Ascending aorta (tissue), 2 donors: ENCODE measurements at regions of chr3 and their contacts with region 1.

Region 1: GRCh38 chr3:101809178-101810021 is 30.4 kb downstream of the NXPE3 start:
- DNase-seq: no peak
- H3K4me3 ChIP-seq: no peak overlapping the region
- H3K27ac ChIP-seq: peak overlapping the region in 1 of 2 donors; percentile 24
- H3K4me1 ChIP-seq: peaks cover 0 to 17% of the 10 kb centered on the region in 2 donors
- H3K27me3 ChIP-seq: no peaks in the 10 kb centered on the region
- CTCF ChIP-seq: peak; percentile 52 to 69 (median 63)

Region 2: DNA sequence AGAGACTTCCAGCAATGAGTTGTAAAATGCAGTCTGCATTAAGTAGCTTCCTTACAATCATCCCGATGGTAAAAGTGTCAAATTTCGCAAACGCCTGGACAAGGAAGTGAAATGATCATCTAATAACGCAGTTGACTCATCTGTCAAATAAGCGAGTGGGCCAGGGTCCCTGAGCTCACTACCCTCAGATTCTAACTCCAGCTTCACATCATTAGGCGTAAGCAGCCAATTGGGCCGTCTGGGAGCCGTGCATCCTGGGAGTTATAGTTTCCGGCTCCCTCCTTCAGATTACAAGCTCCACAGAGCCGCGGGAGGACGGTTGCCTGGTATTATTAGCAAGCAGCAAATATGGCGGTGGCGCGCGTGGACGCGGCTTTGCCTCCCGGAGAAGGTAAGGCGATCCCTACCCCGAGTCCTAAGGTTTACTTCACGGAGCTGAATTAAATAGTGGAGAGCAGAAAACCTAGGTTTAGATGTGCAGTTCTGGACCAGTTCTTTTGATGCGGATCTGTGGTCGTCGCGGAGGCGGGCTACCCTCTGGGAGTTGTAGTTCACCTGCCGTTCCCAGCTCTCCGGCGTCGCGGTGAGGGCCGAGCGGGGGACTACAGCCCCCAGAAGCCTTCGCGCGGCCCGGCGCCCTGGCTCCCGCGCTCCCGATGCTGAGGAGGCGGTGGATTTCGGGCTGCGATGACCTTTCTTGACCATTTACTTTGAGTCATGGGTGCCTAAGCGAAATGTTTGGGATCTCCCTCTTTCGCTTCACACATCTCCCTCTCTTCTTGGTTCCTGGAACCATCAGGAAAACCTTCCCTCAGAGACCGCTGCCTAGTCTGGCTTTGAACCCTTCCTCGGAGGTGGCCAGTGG is 84.8 kb before region 1 on chr3 and contains the start of gene CEP97:
- intact Hi-C with region 1: no loop called
- DNase-seq: peak; percentile 80 to 96
- H3K4me3 ChIP-seq: peak within 1 kb of the TSS; percentile 70 to 75
- H3K27ac ChIP-seq: peak within 1 kb of the TSS; percentile 54 to 72
- H3K4me1 ChIP-seq: peaks cover 0 to 4% of the 10 kb centered on the region in 2 donors
- H3K27me3 ChIP-seq: no peaks in the 10 kb centered on the region
- CTCF ChIP-seq: peak in 1 of 3 experiments; percentile 6
- total RNA-seq, gene CEP97: 1.3 TPM

Region 3: DNA sequence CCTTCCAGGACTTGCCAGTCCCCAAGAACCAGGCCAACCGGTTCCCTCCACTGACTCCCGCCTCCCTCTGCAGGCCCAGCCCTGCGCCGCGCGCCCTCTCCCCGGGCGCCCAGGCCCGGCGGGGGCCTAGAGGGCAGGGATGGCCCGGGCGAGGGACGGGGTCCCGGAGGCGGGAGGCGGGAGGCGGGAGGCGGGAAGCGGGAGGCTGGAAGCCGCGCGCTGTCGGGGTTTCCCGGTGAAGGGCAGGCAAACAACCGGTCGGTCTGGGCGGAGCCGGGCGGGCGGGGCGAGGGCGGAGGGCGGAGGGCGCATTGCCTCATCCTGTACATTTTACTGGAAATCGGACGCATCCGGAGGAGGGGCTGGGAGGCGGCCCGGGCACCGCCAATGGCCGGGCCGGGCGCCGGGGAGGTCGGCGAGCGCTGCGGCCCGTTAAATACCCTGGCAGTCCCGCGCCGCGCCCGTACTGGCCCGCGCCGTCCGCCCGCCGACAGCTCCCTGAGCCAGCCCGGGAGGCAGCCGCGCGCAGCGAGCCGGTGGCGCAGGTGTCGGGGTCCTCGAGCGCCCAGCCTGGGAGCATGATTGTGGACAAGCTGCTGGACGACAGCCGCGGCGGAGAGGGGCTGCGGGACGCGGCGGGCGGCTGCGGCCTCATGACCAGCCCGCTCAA is 39.8 kb after region 1 on chr3 and contains the start of gene NFKBIZ:
- intact Hi-C with region 1: loop called (anchors 5 kb)
- DNase-seq: peak; percentile 87 to 98
- H3K4me3 ChIP-seq: peak within 1 kb of the TSS; percentile 90 to 93
- H3K27ac ChIP-seq: peak within 1 kb of the TSS; percentile 98 to 99
- H3K4me1 ChIP-seq: peaks cover 0 to 26% of the 10 kb centered on the region in 2 donors
- H3K27me3 ChIP-seq: no peaks in the 10 kb centered on the region
- CTCF ChIP-seq: peak in 1 of 3 experiments; percentile 20
- total RNA-seq, gene NFKBIZ: 349 TPM

Region 4: GRCh38 chr3:101868534-101869464 is 59.4 kb after region 1 on chr3:
- intact Hi-C with region 1: no loop called
- DNase-seq: no peak
- H3K4me3 ChIP-seq: no peak overlapping the region
- H3K27ac ChIP-seq: peak overlapping the region in 1 of 2 donors; percentile 2
- H3K4me1 ChIP-seq: peaks cover 0 to 13% of the 10 kb centered on the region in 2 donors
- H3K27me3 ChIP-seq: no peaks in the 10 kb centered on the region
- CTCF ChIP-seq: no peak

Region 5: GRCh38 chr3:102229062-102229655 is 419.8 kb after region 1 on chr3:
- intact Hi-C with region 1: loop called (anchors 1 kb)
- DNase-seq: peak in 1 of 2 donors; percentile 86
- H3K4me3 ChIP-seq: no peak overlapping the region
- H3K27ac ChIP-seq: no peak overlapping the region
- H3K4me1 ChIP-seq: no peaks in the 10 kb centered on the region
- H3K27me3 ChIP-seq: no peaks in the 10 kb centered on the region
- CTCF ChIP-seq: peak; percentile 74 to 96 (median 93)

Region 6: DNA sequence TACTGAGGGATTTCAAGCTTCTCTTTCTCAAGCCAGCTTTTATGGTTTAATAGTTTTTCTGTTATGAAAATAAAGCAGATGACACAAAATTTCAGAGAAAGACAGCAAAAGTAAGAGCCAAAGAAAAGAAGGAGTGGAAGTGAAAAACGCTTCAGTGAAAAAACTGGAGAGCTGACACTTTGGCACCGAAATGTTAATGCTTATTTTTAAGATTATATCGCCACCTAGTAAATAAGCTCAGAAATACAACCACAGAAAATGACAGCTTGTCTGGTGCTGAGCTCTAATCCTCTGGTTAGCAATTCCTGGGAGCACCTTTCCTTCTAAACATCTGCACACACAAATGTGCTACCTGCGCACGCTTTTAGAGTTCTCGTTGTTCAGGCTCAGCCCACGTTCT is 727.1 kb after region 1 on chr3:
- intact Hi-C with region 1: loop called (anchors 5 kb)
- DNase-seq: no peak
- H3K4me3 ChIP-seq: no peak overlapping the region
- H3K27ac ChIP-seq: no peak overlapping the region
- H3K4me1 ChIP-seq: no peaks in the 10 kb centered on the region
- H3K27me3 ChIP-seq: no peaks in the 10 kb centered on the region
- CTCF ChIP-seq: peak; percentile 15 to 52 (median 18)